PC-9 (cell line): ENCODE measurements at regions of chr21 and their contacts with region 1.

Region 1: DNA sequence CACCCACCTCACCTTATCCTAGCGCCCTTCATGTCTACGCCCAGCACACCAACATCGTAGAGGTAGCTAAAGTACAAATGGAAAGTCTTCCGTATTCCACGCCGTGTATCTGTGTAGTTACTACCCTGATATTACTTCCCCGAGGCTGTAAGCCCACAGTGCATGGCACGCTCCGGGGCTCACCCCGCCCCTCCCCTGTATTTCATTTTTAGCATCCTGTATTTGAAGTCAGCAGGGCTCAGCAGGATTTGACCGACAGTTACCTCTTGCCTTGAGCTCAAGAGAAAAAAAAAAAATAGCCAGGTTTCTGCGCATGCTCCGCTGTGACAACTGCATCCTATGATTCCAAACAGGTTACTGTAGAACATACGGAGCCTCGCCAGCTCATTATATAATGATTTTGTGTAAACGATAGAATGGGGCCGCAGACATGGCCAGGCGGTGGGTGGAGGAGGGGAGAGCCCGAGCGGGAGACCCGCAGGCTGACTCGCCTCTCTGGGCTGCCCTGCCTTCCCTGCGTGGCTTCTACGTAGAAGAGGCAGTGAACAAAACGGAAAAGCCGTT is 1.3 kb downstream of the ABCG1 start:
- DNase-seq: peak; percentile 63 to 78
- H3K4me3 ChIP-seq: peak overlapping the region; percentile 86
- H3K27ac ChIP-seq: no peak overlapping the region
- H3K4me1 ChIP-seq: peaks cover 13% of the 10 kb centered on the region
- H3K27me3 ChIP-seq: no peaks in the 10 kb centered on the region
- CTCF ChIP-seq: no peak

Region 2: GRCh38 chr21:42158808-42159207 is 61.4 kb before region 1 on chr21:
- CTCF ChIA-PET with region 1: interaction called, 26 read pairs
- POLR2A ChIA-PET with region 1: no interaction called
- intact Hi-C with region 1: no loop called
- DNase-seq: no peak
- H3K4me3 ChIP-seq: no peak overlapping the region
- H3K27ac ChIP-seq: no peak overlapping the region
- H3K4me1 ChIP-seq: no peaks in the 10 kb centered on the region
- H3K27me3 ChIP-seq: no peaks in the 10 kb centered on the region
- CTCF ChIP-seq: no peak

Region 3: GRCh38 chr21:42199488-42200458 is 20.4 kb before region 1 on chr21:
- CTCF ChIA-PET with region 1: no interaction called
- POLR2A ChIA-PET with region 1: no interaction called
- intact Hi-C with region 1: no loop called
- DNase-seq: peak in 1 of 2 experiments; percentile 79
- H3K4me3 ChIP-seq: peak overlapping the region; percentile 41; the same call in 1 of the 2 replicates
- H3K27ac ChIP-seq: peak overlapping the region; percentile 82
- H3K4me1 ChIP-seq: peaks cover 38% of the 10 kb centered on the region
- H3K27me3 ChIP-seq: no peaks in the 10 kb centered on the region
- CTCF ChIP-seq: no peak